GM12878 (cell line): ENCODE measurements at regions of chr1 and their contacts with region 1.

Region 1: DNA sequence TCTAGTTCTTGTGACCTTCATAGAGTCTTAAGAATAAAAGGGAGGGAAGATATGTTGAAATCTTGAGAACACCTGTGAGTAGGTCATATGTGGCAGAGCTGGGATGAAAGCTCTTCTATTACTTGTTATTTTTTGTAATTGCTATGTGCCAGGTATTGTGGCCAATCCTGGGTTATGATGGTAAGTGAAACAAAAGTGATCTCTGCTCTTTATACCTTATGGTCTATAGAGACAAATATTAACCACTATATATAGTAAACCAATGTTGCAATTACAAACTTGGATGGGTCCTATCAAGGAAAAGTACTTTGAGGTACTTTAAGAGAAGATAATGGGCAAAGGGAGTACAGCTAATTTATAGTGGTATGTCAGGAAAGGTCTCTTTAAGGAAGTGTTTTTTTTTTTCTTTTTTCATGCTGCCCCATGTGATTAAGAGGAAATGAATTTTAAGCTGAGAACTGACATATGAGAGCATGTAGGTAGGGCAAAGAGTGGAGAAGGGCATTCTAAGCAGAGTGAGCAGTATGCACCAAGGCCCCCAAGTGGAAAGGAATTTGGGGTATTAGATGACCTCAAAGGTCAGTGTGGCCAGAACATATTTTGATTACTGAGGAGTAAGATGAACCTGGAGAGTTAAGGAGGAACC is 43.3 kb downstream of the POU2F1 start:
- DNase-seq: no peak
- ATAC-seq: peak; percentile 65
- H3K4me3 ChIP-seq: no peak overlapping the region
- H3K27ac ChIP-seq: peak overlapping the region; percentile 42
- H3K4me1 ChIP-seq: peaks cover 10% of the 10 kb centered on the region; the same call in 1 of the 2 replicates
- H3K27me3 ChIP-seq: no peaks in the 10 kb centered on the region
- CTCF ChIP-seq: no peak
- EP300 ChIP-seq: no peak
- POLR2A ChIP-seq: no peak
- RAD21 ChIP-seq: no peak

Region 2: DNA sequence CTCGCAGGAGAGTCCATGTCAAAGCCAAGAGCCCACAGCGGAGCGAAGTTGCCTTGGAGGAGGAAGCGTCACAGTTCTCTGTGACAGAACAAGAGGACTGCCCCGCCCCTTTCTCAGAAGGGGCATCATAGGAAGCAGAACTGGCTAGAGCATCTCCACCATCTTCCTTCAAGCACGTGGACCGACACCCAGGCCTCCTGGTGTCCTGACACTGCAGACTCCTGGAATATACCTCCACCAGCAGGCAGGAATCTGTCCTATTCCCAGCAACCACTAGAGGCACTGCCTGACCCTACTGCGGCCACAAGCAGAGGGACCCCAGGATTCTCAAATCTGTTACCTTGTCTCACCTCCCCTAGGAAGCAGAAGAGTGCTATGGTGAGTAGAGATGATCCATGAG is 211.6 kb before region 1 on chr1:
- CTCF ChIA-PET with region 1: no interaction called
- POLR2A ChIA-PET with region 1: no interaction called
- RAD21 ChIA-PET with region 1: no interaction called
- SMC1A ChIA-PET with region 1: no interaction called
- in situ Hi-C with region 1: no loop called
- intact Hi-C with region 1: no loop called
- DNase-seq: no peak
- ATAC-seq: peak; percentile 38; the same call in 2 of the 3 replicates
- H3K4me3 ChIP-seq: no peak overlapping the region
- H3K27ac ChIP-seq: no peak overlapping the region
- H3K4me1 ChIP-seq: no peaks in the 10 kb centered on the region
- H3K27me3 ChIP-seq: no peaks in the 10 kb centered on the region
- CTCF ChIP-seq: peak in 2 of 3 experiments; percentile 26 to 45; a peak in 2 of 6 replicates
- EP300 ChIP-seq: no peak
- POLR2A ChIP-seq: no peak
- RAD21 ChIP-seq: no peak

Region 3: GRCh38 chr1:167066333-167067122 is 197.4 kb before region 1 on chr1:
- CTCF ChIA-PET with region 1: interaction called, 11 read pairs
- POLR2A ChIA-PET with region 1: no interaction called
- RAD21 ChIA-PET with region 1: interaction called, 4 read pairs
- SMC1A ChIA-PET with region 1: interaction called, 5 read pairs
- in situ Hi-C with region 1: no loop called
- intact Hi-C with region 1: loop called (anchors 5 kb)
- DNase-seq: no peak
- ATAC-seq: peak; percentile 97
- H3K4me3 ChIP-seq: peak overlapping the region; percentile 70; the same call in 1 of the 2 replicates
- H3K27ac ChIP-seq: no peak overlapping the region
- H3K4me1 ChIP-seq: no peaks in the 10 kb centered on the region
- H3K27me3 ChIP-seq: no peaks in the 10 kb centered on the region; a peak in 1 of 4 replicates
- CTCF ChIP-seq: peak; percentile 92 to 98 (median 97); a peak in 5 of 6 replicates
- EP300 ChIP-seq: no peak
- POLR2A ChIP-seq: no peak
- RAD21 ChIP-seq: peak; percentile 87

Region 4: DNA sequence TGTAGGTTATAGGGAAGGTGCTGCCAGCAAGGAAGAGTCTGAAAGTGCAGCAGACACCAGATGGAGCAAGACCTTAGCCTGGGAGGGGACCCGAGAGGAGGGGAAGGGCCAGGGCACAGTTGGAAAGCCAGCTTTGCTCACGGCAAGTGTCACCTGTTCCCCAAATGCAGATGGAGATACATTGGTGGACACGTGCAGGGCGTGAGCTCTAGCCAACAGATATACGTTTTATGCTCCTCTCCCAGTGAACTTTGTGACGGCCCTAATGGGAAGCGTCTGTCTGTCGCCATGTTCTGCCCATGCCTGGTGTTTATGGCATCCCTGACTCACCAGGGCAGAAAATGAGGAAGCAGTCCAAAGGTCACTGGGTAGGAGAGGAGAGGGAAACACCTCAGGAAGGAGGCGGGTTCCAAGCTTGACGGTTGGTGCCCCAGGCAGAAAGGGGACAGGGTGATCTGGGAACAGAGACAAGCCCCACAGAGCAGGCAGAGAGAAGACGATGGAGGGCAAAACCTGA is 181.4 kb before region 1 on chr1:
- CTCF ChIA-PET with region 1: no interaction called
- POLR2A ChIA-PET with region 1: no interaction called
- RAD21 ChIA-PET with region 1: no interaction called
- SMC1A ChIA-PET with region 1: no interaction called
- in situ Hi-C with region 1: no loop called
- intact Hi-C with region 1: no loop called
- DNase-seq: no peak
- ATAC-seq: no peak
- H3K4me3 ChIP-seq: no peak overlapping the region
- H3K27ac ChIP-seq: no peak overlapping the region
- H3K4me1 ChIP-seq: no peaks in the 10 kb centered on the region
- H3K27me3 ChIP-seq: no peaks in the 10 kb centered on the region
- CTCF ChIP-seq: no peak
- EP300 ChIP-seq: no peak
- POLR2A ChIP-seq: no peak
- RAD21 ChIP-seq: no peak

Region 5: DNA sequence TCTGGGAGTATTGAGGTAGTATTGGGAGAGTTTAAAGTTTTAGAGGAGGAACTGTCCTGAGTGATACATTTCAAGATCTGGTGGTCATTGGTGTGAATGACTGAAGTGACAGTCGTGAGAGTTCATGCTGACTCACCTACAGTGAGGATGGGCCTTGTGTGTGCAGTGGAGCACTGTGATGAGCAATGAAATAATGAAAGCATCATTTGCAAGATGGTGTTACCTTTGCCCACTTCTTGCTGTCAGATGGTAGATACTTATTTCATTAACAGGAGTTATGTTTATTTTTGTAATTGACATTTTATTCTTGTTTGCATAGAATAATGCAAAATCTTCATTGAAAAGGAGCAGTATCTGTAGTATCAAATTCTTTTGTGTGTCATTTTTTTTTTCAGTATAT is 14.2 kb before region 1 on chr1:
- CTCF ChIA-PET with region 1: interaction called, 22 read pairs
- POLR2A ChIA-PET with region 1: interaction called, 9 read pairs
- RAD21 ChIA-PET with region 1: interaction called, 9 read pairs
- SMC1A ChIA-PET with region 1: interaction called, 73 read pairs
- in situ Hi-C with region 1: no loop called
- intact Hi-C with region 1: no loop called
- DNase-seq: no peak
- ATAC-seq: peak; percentile 78
- H3K4me3 ChIP-seq: no peak overlapping the region
- H3K27ac ChIP-seq: no peak overlapping the region
- H3K4me1 ChIP-seq: peaks cover 23% of the 10 kb centered on the region
- H3K27me3 ChIP-seq: no peaks in the 10 kb centered on the region
- CTCF ChIP-seq: no peak
- EP300 ChIP-seq: no peak
- POLR2A ChIP-seq: no peak
- RAD21 ChIP-seq: no peak

Region 6: GRCh38 chr1:167342846-167343245 is 78.9 kb after region 1 on chr1:
- CTCF ChIA-PET with region 1: interaction called, 245 read pairs
- POLR2A ChIA-PET with region 1: interaction called, 6 read pairs
- RAD21 ChIA-PET with region 1: interaction called, 89 read pairs
- SMC1A ChIA-PET with region 1: interaction called, 145 read pairs
- in situ Hi-C with region 1: loop called (anchors 5 kb)
- intact Hi-C with region 1: loop called (anchors 2 kb)
- DNase-seq: no peak
- ATAC-seq: peak; percentile 93
- H3K4me3 ChIP-seq: no peak overlapping the region
- H3K27ac ChIP-seq: no peak overlapping the region
- H3K4me1 ChIP-seq: no peaks in the 10 kb centered on the region
- H3K27me3 ChIP-seq: no peaks in the 10 kb centered on the region
- CTCF ChIP-seq: peak; percentile 39 to 59 (median 45); a peak in 5 of 6 replicates
- EP300 ChIP-seq: no peak
- POLR2A ChIP-seq: no peak
- RAD21 ChIP-seq: peak; percentile 68

Region 7: GRCh38 chr1:167401260-167401873 is 137.4 kb after region 1 on chr1:
- CTCF ChIA-PET with region 1: interaction called, 22 read pairs
- POLR2A ChIA-PET with region 1: no interaction called
- RAD21 ChIA-PET with region 1: interaction called, 14 read pairs
- SMC1A ChIA-PET with region 1: interaction called, 30 read pairs
- in situ Hi-C with region 1: loop called (anchors 5 kb)
- intact Hi-C with region 1: loop called (anchors 5 kb)
- DNase-seq: peak; percentile 11
- ATAC-seq: peak; percentile 93
- H3K4me3 ChIP-seq: no peak overlapping the region
- H3K27ac ChIP-seq: no peak overlapping the region
- H3K4me1 ChIP-seq: no peaks in the 10 kb centered on the region
- H3K27me3 ChIP-seq: no peaks in the 10 kb centered on the region
- CTCF ChIP-seq: peak; percentile 45 to 76 (median 52); a peak in 5 of 6 replicates
- EP300 ChIP-seq: no peak
- POLR2A ChIP-seq: no peak
- RAD21 ChIP-seq: peak; percentile 73

Region 8: DNA sequence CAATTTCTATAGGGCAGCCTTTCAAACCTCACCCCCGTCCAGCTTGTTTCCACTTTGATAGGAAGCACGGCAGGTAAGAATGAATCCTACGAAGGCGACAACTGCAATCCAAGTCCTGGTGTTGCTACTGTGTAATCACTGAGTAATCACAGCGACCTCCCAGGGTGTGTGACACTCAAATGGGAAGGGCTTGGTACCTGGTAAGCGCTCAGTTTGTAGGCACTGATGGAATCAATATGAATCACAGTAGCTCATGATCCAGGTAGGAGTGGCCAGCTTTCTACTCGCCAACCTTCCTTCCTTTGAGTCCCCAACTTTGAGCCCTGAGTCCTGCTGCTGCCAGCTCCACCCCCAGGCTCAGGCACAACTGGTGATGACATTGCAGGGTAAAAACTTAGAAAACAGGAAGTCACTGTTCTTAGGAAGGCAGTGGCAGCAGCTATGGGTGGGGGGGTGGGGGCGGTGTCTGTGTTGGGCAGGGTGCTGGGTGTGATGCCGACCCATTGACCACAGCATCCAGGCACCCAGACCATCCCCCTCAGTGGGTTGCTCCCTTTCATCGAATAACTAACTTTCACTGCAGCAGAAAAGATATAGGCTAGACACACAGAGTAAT is 183.7 kb after region 1 on chr1:
- CTCF ChIA-PET with region 1: interaction called, 55 read pairs
- POLR2A ChIA-PET with region 1: no interaction called
- RAD21 ChIA-PET with region 1: interaction called, 17 read pairs
- SMC1A ChIA-PET with region 1: interaction called, 43 read pairs
- in situ Hi-C with region 1: loop called (anchors 10 kb)
- intact Hi-C with region 1: loop called (anchors 1 kb)
- DNase-seq: no peak
- ATAC-seq: peak; percentile 89
- H3K4me3 ChIP-seq: no peak overlapping the region
- H3K27ac ChIP-seq: no peak overlapping the region
- H3K4me1 ChIP-seq: peaks cover 10% of the 10 kb centered on the region
- H3K27me3 ChIP-seq: no peaks in the 10 kb centered on the region
- CTCF ChIP-seq: no peak
- EP300 ChIP-seq: no peak
- POLR2A ChIP-seq: no peak
- RAD21 ChIP-seq: no peak

Region 9: GRCh38 chr1:167553136-167554027 is 289.4 kb after region 1 on chr1 and contains the start of gene CREG1:
- CTCF ChIA-PET with region 1: interaction called, 5 read pairs
- POLR2A ChIA-PET with region 1: interaction called, 3 read pairs
- RAD21 ChIA-PET with region 1: interaction called, 11 read pairs
- SMC1A ChIA-PET with region 1: interaction called, 5 read pairs
- in situ Hi-C with region 1: no loop called
- intact Hi-C with region 1: no loop called
- DNase-seq: no peak
- ATAC-seq: peak; percentile 97
- H3K4me3 ChIP-seq: peak within 1 kb of the TSS; percentile 72
- H3K27ac ChIP-seq: peak within 1 kb of the TSS; percentile 51
- H3K4me1 ChIP-seq: peaks cover 9% of the 10 kb centered on the region
- H3K27me3 ChIP-seq: no peaks in the 10 kb centered on the region
- CTCF ChIP-seq: no peak
- EP300 ChIP-seq: no peak
- POLR2A ChIP-seq: peak; percentile 93
- RAD21 ChIP-seq: no peak
- polyA plus RNA-seq, gene CREG1: 5.3 to 11.3 TPM